ENCODE measurements at regions of chr1 and their contacts with region 1.

Region 1: GRCh38 chr1:93878889-93879586 is at the start of gene DNTTIP2:
- DNase-seq: peak; percentile 85 to 90 (median 89)
- H3K4me3 ChIP-seq: peak within 1 kb of the TSS; percentile 83 to 98 (median 91)
- H3K4me3 Mint-ChIP-seq: peak within 1 kb of the TSS; percentile 91 to 95
- H3K27ac ChIP-seq: peak within 1 kb of the TSS; percentile 98 to 100
- H3K27ac Mint-ChIP-seq: peak within 1 kb of the TSS; percentile 97 to 98 (median 98)
- H3K4me1 ChIP-seq: peaks cover 25 to 34% of the 10 kb centered on the region in 2 donors
- H3K4me1 Mint-ChIP-seq: peaks cover 29% of the 10 kb centered on the region
- H3K27me3 ChIP-seq: no peaks in the 10 kb centered on the region
- H3K27me3 Mint-ChIP-seq: peaks cover 0 to 4% (median 0%) of the 10 kb centered on the region in 3 donors
- CTCF ChIP-seq: no peak
- polyA plus RNA-seq, gene DNTTIP2: 21.1 to 68.8 (median 42.1) TPM

Region 2: DNA sequence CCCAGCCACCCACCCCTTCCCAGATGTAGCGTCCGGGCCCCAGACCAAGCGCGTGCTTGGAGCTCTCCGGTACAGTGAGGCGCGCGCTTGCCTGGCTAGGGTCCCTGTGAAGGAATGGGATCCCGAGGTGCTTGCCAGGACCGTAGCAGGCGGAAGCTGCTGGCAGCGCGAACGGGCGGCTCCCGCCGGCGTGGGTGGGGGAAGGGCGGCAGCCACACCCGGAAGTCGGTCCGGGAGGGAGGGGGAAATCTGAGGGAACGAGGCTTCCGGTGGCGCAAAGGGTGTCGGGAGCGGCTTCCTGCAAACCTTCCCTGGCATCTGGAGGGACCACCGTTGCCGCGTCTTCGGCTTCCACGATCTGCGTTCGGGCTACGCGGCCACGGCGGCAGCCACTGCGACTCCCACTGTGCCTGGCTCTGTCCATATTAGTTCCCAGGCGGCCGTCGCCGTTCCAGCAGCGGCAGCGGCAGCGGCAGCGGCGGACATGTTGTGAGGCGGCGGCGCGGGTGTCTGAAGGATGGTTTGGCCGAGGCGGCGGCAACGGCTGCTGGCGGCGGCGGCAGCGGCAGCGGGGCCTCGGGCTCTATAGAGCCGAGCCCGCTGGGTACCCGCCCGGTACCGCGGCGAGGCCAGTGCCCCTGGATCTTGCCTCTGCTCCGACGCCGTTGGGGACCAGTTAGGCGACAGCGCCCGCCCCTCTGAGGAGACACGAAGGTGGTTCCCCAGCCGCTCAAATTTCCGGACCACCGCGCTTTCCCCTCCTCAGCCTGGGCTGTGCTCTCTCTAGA is 533.2 kb before region 1 on chr1 and contains the start of gene DR1:
- intact Hi-C with region 1: loop called in 1 of 2 experiments (anchors 10 kb)
- DNase-seq: peak; percentile 82 to 87 (median 86)
- H3K4me3 ChIP-seq: peak within 1 kb of the TSS; percentile 80 to 99 (median 97)
- H3K4me3 Mint-ChIP-seq: peak within 1 kb of the TSS; percentile 99 to 100
- H3K27ac ChIP-seq: peak within 1 kb of the TSS; percentile 95 to 98
- H3K27ac Mint-ChIP-seq: peak within 1 kb of the TSS; percentile 96 to 99 (median 98)
- H3K4me1 ChIP-seq: peaks cover 20 to 43% of the 10 kb centered on the region in 2 donors
- H3K4me1 Mint-ChIP-seq: peaks cover 41% of the 10 kb centered on the region
- H3K27me3 ChIP-seq: no peaks in the 10 kb centered on the region
- H3K27me3 Mint-ChIP-seq: no peaks in the 10 kb centered on the region
- CTCF ChIP-seq: no peak
- polyA plus RNA-seq, gene DR1: 13.5 to 61.8 (median 61.0) TPM

Region 3: DNA sequence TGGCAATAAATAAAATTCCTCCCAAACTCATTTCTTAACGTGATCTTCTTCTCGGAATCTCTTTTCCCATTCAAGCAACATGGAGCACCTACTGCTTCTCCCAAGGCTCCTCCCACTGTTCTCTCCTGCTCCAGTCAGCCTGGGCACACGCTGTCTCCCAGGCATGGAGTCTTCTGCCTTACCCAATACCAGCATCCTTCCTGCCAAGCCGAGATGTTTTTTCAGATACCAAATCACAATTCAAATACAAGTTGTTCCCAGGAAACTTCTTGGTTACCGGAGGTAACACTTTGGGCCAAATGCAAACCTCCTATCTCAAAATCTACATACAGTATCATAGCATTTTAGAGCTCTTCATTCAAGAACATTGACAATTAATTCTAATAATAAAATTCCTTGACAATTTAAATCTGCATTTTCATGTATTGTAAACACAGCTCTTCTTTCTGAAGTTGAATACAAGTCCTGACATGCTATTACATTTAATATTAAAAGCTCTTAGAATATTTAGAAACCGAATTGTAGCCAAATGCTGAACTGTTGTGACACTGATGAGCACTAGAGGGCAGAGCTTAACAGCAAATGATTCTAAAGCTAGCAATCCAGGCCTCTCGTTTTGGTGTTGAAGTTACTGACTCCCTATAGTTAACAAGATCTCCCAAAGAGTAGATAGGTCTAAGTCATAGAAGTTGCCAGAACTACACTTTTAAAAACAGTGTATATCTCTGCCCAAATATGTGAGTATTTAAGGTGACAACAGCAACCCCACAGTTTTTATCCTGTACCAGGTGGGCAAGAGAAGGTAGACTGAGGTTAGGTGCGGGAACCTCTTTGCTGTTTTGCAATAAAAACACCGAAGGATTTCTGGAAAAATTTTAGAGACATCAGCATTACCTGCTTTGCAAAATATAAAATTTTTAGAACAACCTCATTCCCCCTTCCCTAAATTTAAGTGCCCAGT is 249.7 kb before region 1 on chr1:
- intact Hi-C with region 1: no loop called
- DNase-seq: peak; percentile 42 to 66 (median 61)
- H3K4me3 ChIP-seq: no peak overlapping the region
- H3K4me3 Mint-ChIP-seq: no peak overlapping the region
- H3K27ac ChIP-seq: no peak overlapping the region
- H3K27ac Mint-ChIP-seq: no peak overlapping the region
- H3K4me1 ChIP-seq: no peaks in the 10 kb centered on the region
- H3K4me1 Mint-ChIP-seq: no peaks in the 10 kb centered on the region
- H3K27me3 ChIP-seq: no peaks in the 10 kb centered on the region
- H3K27me3 Mint-ChIP-seq: peaks cover 0 to under 1% (median 0%) of the 10 kb centered on the region in 3 donors
- CTCF ChIP-seq: peak; percentile 84

Region 4: DNA sequence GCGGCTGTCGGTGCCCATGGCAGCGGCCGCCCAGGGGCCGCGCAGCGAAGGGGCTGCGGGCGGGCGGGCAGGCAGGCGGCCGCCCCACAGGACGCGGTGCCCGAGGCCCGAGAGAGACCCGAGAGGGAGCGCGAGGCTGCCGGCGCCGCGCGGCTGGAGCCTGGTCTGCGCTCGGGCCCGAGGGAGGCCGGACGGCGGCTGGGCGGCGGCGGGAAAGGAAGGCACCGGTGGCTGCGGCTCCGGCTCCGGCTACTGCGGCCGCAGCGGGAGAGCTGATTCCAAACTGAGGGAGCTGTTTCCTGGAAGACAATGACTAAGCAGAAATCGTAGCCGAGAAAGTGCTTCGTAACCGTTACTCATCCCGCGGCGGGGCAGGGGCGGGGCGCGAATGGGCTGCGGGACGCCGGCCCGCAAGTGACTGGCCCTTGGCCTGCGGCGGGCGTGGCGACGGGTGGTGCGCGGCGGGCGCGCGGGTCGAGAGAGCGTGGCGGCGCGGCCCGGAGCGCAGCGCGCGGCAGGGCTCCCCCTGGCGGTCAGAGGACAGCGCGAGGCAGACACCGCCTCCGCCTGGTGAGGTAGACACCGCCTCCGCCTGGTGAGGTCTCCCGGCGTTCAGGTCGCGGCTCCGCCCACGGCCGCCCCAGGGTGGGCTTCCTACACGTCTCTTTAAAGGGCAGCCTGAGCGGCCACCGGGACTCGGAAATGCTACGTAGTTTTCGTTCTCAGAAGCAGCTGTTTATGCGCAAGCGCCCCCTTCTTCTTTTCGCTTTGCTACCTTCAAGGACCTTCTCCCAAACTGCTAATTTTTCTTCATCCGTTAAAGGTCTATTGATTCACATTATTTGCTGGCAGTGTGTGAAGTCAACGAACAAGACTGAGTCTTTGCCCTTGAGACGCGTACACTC is 30.4 kb after region 1 on chr1 and contains the start of gene GCLM:
- intact Hi-C with region 1: loop called in 1 of 2 experiments (anchors 2 kb)
- DNase-seq: peak; percentile 88 to 95 (median 92)
- H3K4me3 ChIP-seq: peak within 1 kb of the TSS; percentile 63 to 86 (median 78)
- H3K4me3 Mint-ChIP-seq: peak within 1 kb of the TSS; percentile 91 to 94
- H3K27ac ChIP-seq: peak within 1 kb of the TSS; percentile 52 to 56
- H3K27ac Mint-ChIP-seq: peak within 1 kb of the TSS; percentile 65 to 92 (median 84)
- H3K4me1 ChIP-seq: peaks cover 12 to 28% of the 10 kb centered on the region in 2 donors
- H3K4me1 Mint-ChIP-seq: peaks cover 22% of the 10 kb centered on the region
- H3K27me3 ChIP-seq: no peaks in the 10 kb centered on the region
- H3K27me3 Mint-ChIP-seq: peaks cover 5 to 11% (median 9%) of the 10 kb centered on the region in 3 donors
- CTCF ChIP-seq: peak; percentile 97
- polyA plus RNA-seq, gene GCLM: 1.2 to 4.4 (median 3.2) TPM

Region 5: DNA sequence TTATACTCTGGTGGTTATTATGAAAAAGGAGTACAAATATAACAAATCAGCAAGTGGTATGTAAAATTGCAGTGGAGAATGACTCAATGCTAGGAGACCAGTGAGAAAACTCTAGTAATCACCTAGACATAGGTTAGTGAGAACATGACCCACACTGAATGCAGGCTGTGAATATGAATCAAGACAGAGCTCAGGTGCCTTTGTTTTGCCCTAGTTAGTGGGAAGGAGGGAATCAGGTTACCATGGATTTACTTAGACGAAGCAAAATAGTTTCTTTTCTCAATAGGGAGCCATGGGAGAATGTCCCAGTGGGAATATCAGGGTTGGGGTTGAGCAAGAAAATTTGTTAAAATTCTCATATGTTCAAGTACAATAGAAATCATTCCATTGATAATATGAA is 40.7 kb after region 1 on chr1:
- intact Hi-C with region 1: no loop called
- DNase-seq: no peak
- H3K4me3 ChIP-seq: no peak overlapping the region
- H3K4me3 Mint-ChIP-seq: no peak overlapping the region
- H3K27ac ChIP-seq: no peak overlapping the region
- H3K27ac Mint-ChIP-seq: no peak overlapping the region
- H3K4me1 ChIP-seq: no peaks in the 10 kb centered on the region
- H3K4me1 Mint-ChIP-seq: no peaks in the 10 kb centered on the region
- H3K27me3 ChIP-seq: no peaks in the 10 kb centered on the region
- H3K27me3 Mint-ChIP-seq: peaks cover 2 to 5% (median 5%) of the 10 kb centered on the region in 3 donors
- CTCF ChIP-seq: no peak

Measured in CD14-positive monocyte (primary cell).